ENCODE measurements at regions of chr5 and their contacts with region 1.

Region 1: GRCh38 chr5:163437309-163438182 is at the start of gene CCNG1:
- DNase-seq: peak; percentile 81 to 97
- H3K4me3 ChIP-seq: peak within 1 kb of the TSS; percentile 75 to 82
- H3K27ac ChIP-seq: peak within 1 kb of the TSS; percentile 84 to 91
- H3K4me1 ChIP-seq: peaks cover 5 to 9% of the 10 kb centered on the region in 2 donors
- H3K27me3 ChIP-seq: no peaks in the 10 kb centered on the region
- CTCF ChIP-seq: no peak
- total RNA-seq, gene CCNG1: 20.5 TPM

Region 2: GRCh38 chr5:163459922-163460766 is 22.6 kb after region 1 on chr5 and contains the starts of genes HMMR and NUDCD2:
- intact Hi-C with region 1: loop called (anchors 1 kb)
- DNase-seq: peak; percentile 89 to 97
- H3K4me3 ChIP-seq: peak within 1 kb of the TSS; percentile 72 to 79
- H3K27ac ChIP-seq: peak within 1 kb of the TSS; percentile 83 to 96
- H3K4me1 ChIP-seq: peaks cover 0 to 7% of the 10 kb centered on the region in 2 donors
- H3K27me3 ChIP-seq: no peaks in the 10 kb centered on the region
- CTCF ChIP-seq: no peak
- total RNA-seq, gene HMMR: not detected
- total RNA-seq, gene NUDCD2: 4.6 TPM

Region 3: GRCh38 chr5:163505368-163506094 is 68.0 kb after region 1 on chr5 and contains the start of gene MAT2B:
- intact Hi-C with region 1: loop called (anchors 1 kb)
- DNase-seq: peak; percentile 77 to 97
- H3K4me3 ChIP-seq: peak within 1 kb of the TSS; percentile 83 to 93
- H3K27ac ChIP-seq: peak within 1 kb of the TSS; percentile 97 to 99
- H3K4me1 ChIP-seq: peaks cover 7 to 26% of the 10 kb centered on the region in 2 donors
- H3K27me3 ChIP-seq: no peaks in the 10 kb centered on the region
- CTCF ChIP-seq: peak; percentile 20 to 63 (median 45)
- total RNA-seq, gene MAT2B: 21.8 TPM

Region 4: GRCh38 chr5:163596608-163597315 is 159.2 kb after region 1 on chr5:
- intact Hi-C with region 1: no loop called
- DNase-seq: no peak
- H3K4me3 ChIP-seq: no peak overlapping the region
- H3K27ac ChIP-seq: no peak overlapping the region
- H3K4me1 ChIP-seq: no peaks in the 10 kb centered on the region
- H3K27me3 ChIP-seq: no peaks in the 10 kb centered on the region
- CTCF ChIP-seq: no peak